Thyroid gland (tissue), 4 donors: ENCODE measurements at regions of chr9 and their contacts with region 1.

Region 1: GRCh38 chr9:18268381-18268780 is 205.6 kb upstream of the ADAMTSL1 start:
- DNase-seq: no peak
- H3K4me3 ChIP-seq: no peak overlapping the region
- H3K27ac ChIP-seq: no peak overlapping the region
- H3K4me1 ChIP-seq: no peaks in the 10 kb centered on the region
- H3K27me3 ChIP-seq: no peaks in the 10 kb centered on the region
- CTCF ChIP-seq: no peak
- POLR2A ChIP-seq: no peak

Region 2: DNA sequence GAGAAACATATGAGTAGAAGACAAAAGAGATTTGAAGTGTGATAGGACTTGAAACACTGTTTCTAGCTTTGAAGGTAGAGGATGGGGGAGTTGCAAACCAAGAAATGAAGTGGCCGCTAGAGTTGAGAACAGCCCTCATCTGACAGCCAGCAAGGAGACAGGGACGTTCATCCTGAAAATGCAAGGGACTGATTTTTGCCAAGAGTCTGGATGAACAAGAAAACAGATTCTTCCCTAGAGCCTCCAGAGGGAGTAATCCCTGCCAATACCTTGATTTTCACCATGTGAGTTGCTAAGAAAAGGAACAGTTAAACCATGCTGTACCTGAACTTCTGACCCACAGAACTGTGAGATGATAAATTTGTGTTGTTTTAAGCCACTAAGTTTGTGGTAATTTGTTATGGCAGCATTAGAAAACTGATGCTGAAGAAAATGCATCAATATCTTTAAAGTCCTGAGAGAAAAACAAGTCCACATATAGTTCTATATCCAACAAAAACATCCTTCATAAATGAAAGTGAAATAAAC is 51.6 kb after region 1 on chr9:
- intact Hi-C with region 1: loop called (anchors 5 kb)
- DNase-seq: no peak
- H3K4me3 ChIP-seq: no peak overlapping the region
- H3K27ac ChIP-seq: no peak overlapping the region
- H3K4me1 ChIP-seq: no peaks in the 10 kb centered on the region
- H3K27me3 ChIP-seq: no peaks in the 10 kb centered on the region
- CTCF ChIP-seq: no peak
- POLR2A ChIP-seq: no peak